Activated T-helper 1 cell treated with anti-CD3 and anti-CD28 coated beads, Interleukin-12 subunit alpha, Interleukin-12 subunit beta, Interleukin-2, Interleukin-4 antibody, amounts not matched to agents 30 ng/mL and 10 ng/mL and 1 ng/mL, durations not matched to agents 14 hours and 24 hours and 36 hours (primary cell): ENCODE measurements at regions of chr3 and their contacts with region 1.

Region 1: DNA sequence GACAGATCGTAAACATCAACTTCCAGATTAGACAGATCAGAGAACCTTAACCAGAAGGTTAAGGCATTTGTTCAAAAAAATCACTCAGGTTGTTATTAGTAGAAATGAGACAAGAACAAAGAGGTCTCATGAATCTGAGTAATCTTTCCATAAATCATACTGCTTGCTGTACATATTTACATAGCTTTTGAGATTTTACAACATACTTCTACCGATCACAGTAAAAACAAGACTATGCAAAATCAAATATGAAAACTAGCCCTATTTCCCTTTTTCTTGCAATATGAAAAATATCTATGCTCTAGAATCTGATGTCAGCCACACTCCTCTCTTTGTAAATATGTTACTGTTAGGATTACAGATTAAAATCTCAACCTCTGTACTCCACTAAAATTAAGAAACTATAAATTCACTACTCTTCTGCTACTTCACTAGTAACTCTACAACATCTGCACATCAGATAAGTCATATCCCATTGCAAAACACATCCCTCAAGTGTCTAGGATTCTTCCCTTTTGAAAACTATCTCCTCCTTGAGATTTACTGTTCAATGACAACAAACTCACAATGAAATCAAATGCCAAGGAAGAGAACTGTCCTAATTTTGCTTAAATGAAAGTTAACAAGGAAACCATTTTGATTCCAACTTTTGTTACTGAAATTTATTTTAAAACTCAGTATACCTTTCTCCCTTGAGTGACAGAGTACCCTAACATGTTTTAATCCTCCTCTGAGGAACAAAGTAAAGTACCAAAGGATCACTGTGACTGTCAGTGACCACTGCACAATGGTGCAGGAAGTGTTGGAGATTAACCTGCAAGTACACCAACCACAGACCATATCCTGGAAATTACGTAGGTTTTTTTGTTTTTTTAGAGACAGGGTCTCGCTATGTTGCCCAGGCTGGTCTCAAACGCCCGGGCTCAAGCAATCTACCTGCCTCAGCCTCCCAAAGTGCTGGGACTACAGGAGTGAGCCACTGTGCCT is 12.8 kb downstream of the DCUN1D1 start:
- DNase-seq: no peak
- H3K4me3 Mint-ChIP-seq: peak overlapping the region; percentile 55
- H3K27ac Mint-ChIP-seq: peak overlapping the region; percentile 79
- H3K4me1 Mint-ChIP-seq: peaks cover 62% of the 10 kb centered on the region
- H3K27me3 Mint-ChIP-seq: no peaks in the 10 kb centered on the region

Region 2: DNA sequence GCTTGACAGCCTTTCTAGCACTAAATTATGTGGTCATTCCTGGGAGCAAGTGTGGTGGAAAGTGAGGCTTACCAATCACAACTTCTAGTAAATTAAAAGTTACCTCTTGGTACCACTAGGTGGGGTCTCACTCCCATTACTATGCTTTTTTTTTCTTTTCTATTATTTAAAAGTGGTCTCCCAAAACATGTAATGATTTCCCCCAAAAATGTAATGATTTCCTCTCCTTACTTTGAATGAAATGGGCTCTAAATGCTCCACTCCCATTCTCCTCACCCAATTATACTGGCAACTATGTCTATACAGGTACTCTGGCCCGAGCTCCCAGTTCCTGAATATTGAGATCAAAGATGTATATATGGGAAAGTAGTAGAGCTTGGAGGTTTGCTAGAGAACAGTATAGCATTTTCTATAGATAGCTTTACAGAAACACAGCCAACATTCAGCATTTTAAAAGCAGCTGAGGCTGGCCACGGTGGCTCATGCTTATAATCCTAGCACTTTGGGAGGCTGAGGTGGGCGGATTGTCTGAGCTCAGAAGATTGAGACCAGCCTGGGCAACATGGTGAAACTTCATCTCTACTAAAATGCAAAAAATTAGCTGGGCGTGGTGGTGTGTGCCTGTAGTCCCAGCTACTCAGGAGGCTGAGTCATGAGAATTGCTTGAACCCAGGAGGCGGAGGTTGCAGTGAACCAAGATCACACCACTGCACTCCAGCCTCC is 58.0 kb before region 1 on chr3:
- intact Hi-C with region 1: loop called (anchors 2 kb)
- DNase-seq: no peak
- H3K4me3 Mint-ChIP-seq: no peak overlapping the region
- H3K27ac Mint-ChIP-seq: no peak overlapping the region
- H3K4me1 Mint-ChIP-seq: peaks cover 43% of the 10 kb centered on the region
- H3K27me3 Mint-ChIP-seq: no peaks in the 10 kb centered on the region

Region 3: DNA sequence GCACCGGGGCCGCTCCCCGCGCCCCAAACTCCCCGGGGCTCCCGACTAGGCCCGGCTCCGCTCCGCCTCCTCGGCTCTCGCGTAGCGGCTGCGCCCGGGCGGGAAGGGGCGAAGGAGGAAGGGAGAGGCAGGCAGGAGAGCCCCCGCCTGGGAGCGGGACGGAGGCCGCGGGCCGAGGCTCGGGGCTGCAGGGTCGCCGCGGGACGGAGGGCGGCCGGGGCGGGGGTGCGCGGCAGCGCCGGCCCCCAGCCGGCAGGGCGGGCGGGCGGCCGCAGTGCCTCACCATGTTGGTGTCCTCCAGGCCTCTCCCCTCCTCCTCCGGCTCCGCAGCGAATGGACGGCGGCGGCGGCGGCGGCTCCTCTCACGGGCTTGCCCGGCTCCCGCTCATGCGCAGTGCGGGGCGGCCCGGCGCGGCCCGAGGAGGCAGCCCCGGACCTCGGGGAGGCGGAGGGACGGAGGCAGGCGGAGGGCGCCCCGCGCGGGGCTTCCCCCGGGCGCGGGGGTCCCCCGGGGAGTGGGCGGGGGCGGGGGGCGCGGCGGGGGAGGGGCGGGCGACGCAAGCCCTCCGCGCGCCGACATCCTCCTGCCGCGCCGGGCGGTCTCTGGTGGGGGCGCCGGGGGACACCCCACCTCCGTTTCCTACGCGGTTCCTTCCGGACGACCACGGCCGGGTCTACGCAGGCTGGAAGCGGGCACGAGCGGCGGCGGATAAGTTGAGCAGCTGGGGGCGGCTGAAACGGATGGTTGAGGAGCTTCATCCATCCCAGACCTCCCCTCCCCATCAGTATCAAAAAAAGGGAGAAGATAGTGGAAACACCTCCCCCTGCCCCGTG is 12.9 kb after region 1 on chr3 and contains the start of gene DCUN1D1:
- intact Hi-C with region 1: loop called (anchors 1 kb)
- DNase-seq: peak; percentile 89
- H3K4me3 Mint-ChIP-seq: peak within 1 kb of the TSS; percentile 95
- H3K27ac Mint-ChIP-seq: peak within 1 kb of the TSS; percentile 90
- H3K4me1 Mint-ChIP-seq: peaks cover 26% of the 10 kb centered on the region
- H3K27me3 Mint-ChIP-seq: no peaks in the 10 kb centered on the region
- total RNA-seq, gene DCUN1D1: 63.2 and 67.2 TPM in 2 replicates